CD4-positive, alpha-beta memory T cell (primary cell): ENCODE measurements at regions of chr3 and their contacts with region 1.

Region 1: GRCh38 chr3:156040041-156040440 is 80.3 kb upstream of the KCNAB1 start:
- DNase-seq: no peak
- H3K4me3 ChIP-seq: no peak overlapping the region
- H3K4me3 Mint-ChIP-seq: no peak overlapping the region
- H3K27ac ChIP-seq: no peak overlapping the region
- H3K27ac Mint-ChIP-seq: no peak overlapping the region
- H3K4me1 ChIP-seq: no peaks in the 10 kb centered on the region
- H3K4me1 Mint-ChIP-seq: peaks cover 0 to 2% (median under 1%) of the 10 kb centered on the region in 4 donors
- H3K27me3 ChIP-seq: no peaks in the 10 kb centered on the region
- H3K27me3 Mint-ChIP-seq: peaks cover 2 to 5% of the 10 kb centered on the region in 2 donors

Region 2: DNA sequence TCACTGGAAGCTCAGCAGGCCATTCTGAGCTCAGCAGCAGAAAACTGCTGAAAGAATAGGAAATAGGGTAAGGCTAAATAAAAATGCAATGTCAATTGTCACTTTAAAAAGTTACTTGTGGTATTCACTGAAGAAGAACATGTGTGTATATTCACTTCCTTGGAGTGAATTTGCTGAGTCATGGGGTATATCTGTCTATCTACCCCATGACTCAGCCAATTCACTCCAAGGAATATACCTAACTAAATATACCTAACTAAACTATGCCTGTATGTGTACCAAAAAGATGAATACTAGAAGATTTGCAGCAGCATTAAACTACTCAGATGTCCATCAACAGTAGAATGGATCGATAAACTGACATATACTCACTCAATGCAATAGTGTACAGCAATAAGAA is 10.9 kb after region 1 on chr3:
- CTCF ChIA-PET with region 1: interaction called, 12 read pairs
- POLR2A ChIA-PET with region 1: no interaction called
- intact Hi-C with region 1: no loop called
- DNase-seq: no peak
- H3K4me3 ChIP-seq: no peak overlapping the region
- H3K4me3 Mint-ChIP-seq: no peak overlapping the region
- H3K27ac ChIP-seq: no peak overlapping the region
- H3K27ac Mint-ChIP-seq: no peak overlapping the region
- H3K4me1 ChIP-seq: no peaks in the 10 kb centered on the region
- H3K4me1 Mint-ChIP-seq: no peaks in the 10 kb centered on the region
- H3K27me3 ChIP-seq: no peaks in the 10 kb centered on the region
- H3K27me3 Mint-ChIP-seq: peaks cover 8 to 9% of the 10 kb centered on the region in 2 donors

Region 3: GRCh38 chr3:156547637-156548036 is 507.6 kb after region 1 on chr3:
- CTCF ChIA-PET with region 1: interaction called, 4 read pairs
- POLR2A ChIA-PET with region 1: no interaction called
- intact Hi-C with region 1: loop called (anchors 10 kb)
- DNase-seq: no peak
- H3K4me3 ChIP-seq: no peak overlapping the region
- H3K4me3 Mint-ChIP-seq: no peak overlapping the region
- H3K27ac ChIP-seq: no peak overlapping the region
- H3K27ac Mint-ChIP-seq: peak overlapping the region in 3 of 7 donors; percentile 20 to 84 (median 40)
- H3K4me1 ChIP-seq: peaks cover 20% of the 10 kb centered on the region
- H3K4me1 Mint-ChIP-seq: peaks cover 32 to 53% (median 43%) of the 10 kb centered on the region in 4 donors
- H3K27me3 ChIP-seq: no peaks in the 10 kb centered on the region
- H3K27me3 Mint-ChIP-seq: no peaks in the 10 kb centered on the region

Region 4: GRCh38 chr3:157239082-157239704 is 1199.2 kb after region 1 on chr3:
- CTCF ChIA-PET with region 1: no interaction called
- POLR2A ChIA-PET with region 1: no interaction called
- intact Hi-C with region 1: loop called (anchors 10 kb)
- DNase-seq: peak; percentile 55 to 70 (median 65)
- H3K4me3 ChIP-seq: no peak overlapping the region
- H3K4me3 Mint-ChIP-seq: no peak overlapping the region
- H3K27ac ChIP-seq: no peak overlapping the region
- H3K27ac Mint-ChIP-seq: peak overlapping the region in 2 of 7 donors; percentile 29 to 32
- H3K4me1 ChIP-seq: no peaks in the 10 kb centered on the region
- H3K4me1 Mint-ChIP-seq: peaks cover 0 to 5% (median 3%) of the 10 kb centered on the region in 4 donors
- H3K27me3 ChIP-seq: no peaks in the 10 kb centered on the region
- H3K27me3 Mint-ChIP-seq: peaks cover 1 to 4% of the 10 kb centered on the region in 2 donors